Left lung (tissue), 14 donors: ENCODE measurements at regions of chr6 and their contacts with region 1.

Region 1: DNA sequence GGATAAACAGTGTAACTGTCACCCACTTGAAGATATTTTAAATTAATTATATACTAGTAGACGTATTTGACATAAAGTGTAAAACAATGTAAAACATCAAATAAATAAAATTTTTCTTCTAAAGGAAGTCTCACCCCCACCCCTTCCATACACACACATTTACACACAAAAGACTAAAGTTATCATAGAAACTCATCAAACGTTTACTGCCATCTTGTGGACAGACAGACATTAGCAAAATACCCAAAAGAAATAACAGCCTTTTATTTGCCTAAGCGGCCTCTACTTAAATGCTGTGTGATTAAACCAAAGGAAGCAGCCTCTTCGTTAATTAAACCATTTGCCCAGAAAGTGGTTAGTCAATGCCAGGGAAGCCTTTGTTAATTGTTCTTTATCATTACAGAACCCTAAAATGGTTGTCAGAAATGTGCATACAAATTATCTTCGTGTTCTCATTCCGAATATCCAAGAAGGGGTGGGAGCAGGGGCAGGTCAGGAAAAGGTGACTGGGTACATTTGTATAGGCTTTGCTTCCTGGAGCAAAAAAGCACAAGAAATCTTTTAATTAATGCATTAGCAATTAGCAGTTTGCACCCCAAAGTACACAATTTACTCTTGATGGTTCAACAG is 176.2 kb upstream of the SASH1 start:
- DNase-seq: peak in 2 of 4 donors; percentile 49 to 68
- ATAC-seq: peak; percentile 82
- H3K4me3 ChIP-seq: no peak overlapping the region
- H3K27ac ChIP-seq: no peak overlapping the region
- H3K4me1 ChIP-seq: no peaks in the 10 kb centered on the region
- H3K27me3 ChIP-seq: no peaks in the 10 kb centered on the region
- CTCF ChIP-seq: peak; percentile 54 to 56

Region 2: GRCh38 chr6:147506704-147507114 is 659.7 kb before region 1 on chr6:
- intact Hi-C with region 1: loop called in 1 of 2 experiments (anchors 5 kb)
- DNase-seq: peak; percentile 69 to 90 (median 74)
- ATAC-seq: peak; percentile 77
- H3K4me3 ChIP-seq: peak overlapping the region; percentile 53 to 63
- H3K27ac ChIP-seq: no peak overlapping the region
- H3K4me1 ChIP-seq: peaks cover 15 to 24% of the 10 kb centered on the region in 2 donors
- H3K27me3 ChIP-seq: peaks cover 0 to 95% of the 10 kb centered on the region in 2 donors
- CTCF ChIP-seq: peak; percentile 54 to 74

Region 3: GRCh38 chr6:147900247-147900830 is 266.1 kb before region 1 on chr6:
- intact Hi-C with region 1: no loop called
- DNase-seq: no peak
- ATAC-seq: no peak
- H3K4me3 ChIP-seq: no peak overlapping the region
- H3K27ac ChIP-seq: no peak overlapping the region
- H3K4me1 ChIP-seq: no peaks in the 10 kb centered on the region
- H3K27me3 ChIP-seq: no peaks in the 10 kb centered on the region
- CTCF ChIP-seq: no peak

Region 4: GRCh38 chr6:148395583-148396101 is 229.2 kb after region 1 on chr6:
- intact Hi-C with region 1: no loop called
- DNase-seq: no peak
- ATAC-seq: no peak
- H3K4me3 ChIP-seq: no peak overlapping the region
- H3K27ac ChIP-seq: peak overlapping the region in 1 of 2 donors; percentile 1
- H3K4me1 ChIP-seq: peaks cover 5 to 26% of the 10 kb centered on the region in 2 donors
- H3K27me3 ChIP-seq: no peaks in the 10 kb centered on the region
- CTCF ChIP-seq: no peak